Heart right ventricle (tissue), 16 donors: ENCODE measurements at regions of chr16 and their contacts with region 1.

Region 1: GRCh38 chr16:68503334-68503733 is 35.8 kb upstream of the ZFP90 start:
- DNase-seq: no peak
- ATAC-seq: no peak
- H3K4me3 ChIP-seq: no peak overlapping the region
- H3K27ac ChIP-seq: no peak overlapping the region
- H3K4me1 ChIP-seq: no peaks in the 10 kb centered on the region
- H3K27me3 ChIP-seq: peaks cover 0 to 13% (median 0%) of the 10 kb centered on the region in 7 donors
- CTCF ChIP-seq: no peak

Region 2: GRCh38 chr16:68367030-68367429 is 136.3 kb before region 1 on chr16:
- intact Hi-C with region 1: loop called in 2 of 10 experiments (anchors 5 to 10 kb)
- DNase-seq: no peak
- ATAC-seq: peak in 1 of 8 donors; percentile 20
- H3K4me3 ChIP-seq: no peak overlapping the region
- H3K27ac ChIP-seq: no peak overlapping the region
- H3K4me1 ChIP-seq: peaks cover 0 to 35% (median 0%) of the 10 kb centered on the region in 9 donors
- H3K27me3 ChIP-seq: peaks cover 0 to 29% (median 14%) of the 10 kb centered on the region in 7 donors
- CTCF ChIP-seq: peak in 7 of 9 donors; percentile 28 to 61 (median 44)

Region 3: GRCh38 chr16:68448360-68448970 is 54.9 kb before region 1 on chr16 and contains the start of gene SMPD3:
- intact Hi-C with region 1: loop called in 1 of 10 experiments (anchors 5 kb)
- DNase-seq: peak; percentile 96 to 97
- ATAC-seq: peak; percentile 98 to 100 (median 100)
- H3K4me3 ChIP-seq: peak within 1 kb of the TSS; percentile 4 to 65 (median 54)
- H3K27ac ChIP-seq: no peak within 1 kb of the TSS
- H3K4me1 ChIP-seq: peaks cover 11 to 24% (median 17%) of the 10 kb centered on the region in 9 donors
- H3K27me3 ChIP-seq: peaks cover 0 to 41% (median 22%) of the 10 kb centered on the region in 7 donors
- CTCF ChIP-seq: peak in 3 of 9 donors; percentile 5 to 13 (median 11)
- total RNA-seq, gene SMPD3: 0.05 to 1.2 (median 0.34) TPM in 9 of 10 donors, not detected in the other